Calu3 (cell line): ENCODE measurements at regions of chr1 and their contacts with region 1.

Region 1: GRCh38 chr1:247103859-247104591 is at the start of gene ZNF669:
- DNase-seq: peak; percentile 97
- H3K4me3 Mint-ChIP-seq: peak within 1 kb of the TSS; percentile 93
- H3K27ac Mint-ChIP-seq: peak within 1 kb of the TSS; percentile 89
- H3K4me1 Mint-ChIP-seq: peaks cover 6% of the 10 kb centered on the region
- H3K27me3 Mint-ChIP-seq: no peaks in the 10 kb centered on the region
- CTCF ChIP-seq: no peak
- total RNA-seq, gene ZNF669: 8.9 and 10.5 TPM in 2 replicates

Region 2: GRCh38 chr1:246931549-246932365 is 172.3 kb before region 1 on chr1 and contains the start of gene AHCTF1:
- CTCF ChIA-PET with region 1: no interaction called
- intact Hi-C with region 1: loop called (anchors 10 kb)
- DNase-seq: peak; percentile 97
- H3K4me3 Mint-ChIP-seq: peak within 1 kb of the TSS; percentile 97
- H3K27ac Mint-ChIP-seq: peak within 1 kb of the TSS; percentile 97
- H3K4me1 Mint-ChIP-seq: peaks cover 21% of the 10 kb centered on the region
- H3K27me3 Mint-ChIP-seq: no peaks in the 10 kb centered on the region
- CTCF ChIP-seq: no peak
- total RNA-seq, gene AHCTF1: 61.3 and 64.0 TPM in 2 replicates

Region 3: DNA sequence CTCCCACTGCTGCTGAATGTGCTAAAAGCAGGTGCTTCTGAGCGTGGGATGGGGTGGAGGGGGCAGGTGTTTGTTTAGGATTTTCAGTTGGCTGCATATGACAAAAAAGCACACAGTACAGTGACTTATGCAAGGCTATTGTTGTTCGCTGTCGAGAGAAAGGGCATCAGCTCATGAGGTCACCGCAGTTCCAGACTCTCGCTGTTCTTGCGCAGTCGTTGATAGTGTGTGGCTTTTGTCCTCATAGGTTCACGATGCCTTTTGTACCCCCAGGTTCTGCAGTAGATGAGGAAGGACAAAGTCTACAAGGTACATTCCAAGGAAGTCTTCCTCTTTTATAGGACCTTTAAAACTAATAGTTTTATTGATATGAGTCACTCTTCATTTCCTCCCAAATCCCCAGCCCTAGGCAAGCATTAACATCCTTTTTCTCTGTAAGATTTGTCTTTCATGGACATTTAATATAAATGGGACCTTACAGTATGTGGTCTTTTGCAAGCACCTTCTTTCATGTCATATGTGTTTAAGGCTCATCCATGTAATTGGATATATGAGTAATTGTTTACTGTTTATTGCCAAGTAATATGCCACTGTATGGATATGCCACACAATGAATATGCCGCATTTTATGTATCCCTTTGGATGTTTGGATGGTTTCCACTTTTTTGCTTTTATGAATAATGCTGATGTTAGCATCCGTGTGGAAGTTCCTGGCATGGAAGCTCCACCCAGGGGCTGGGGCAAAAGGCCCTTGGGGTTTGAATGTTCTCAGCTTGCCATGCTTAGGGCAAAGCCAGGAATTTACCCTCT is 297.5 kb after region 1 on chr1:
- CTCF ChIA-PET with region 1: no interaction called
- intact Hi-C with region 1: no loop called
- DNase-seq: no peak
- H3K4me3 Mint-ChIP-seq: no peak overlapping the region
- H3K27ac Mint-ChIP-seq: no peak overlapping the region
- H3K4me1 Mint-ChIP-seq: no peaks in the 10 kb centered on the region
- H3K27me3 Mint-ChIP-seq: no peaks in the 10 kb centered on the region
- CTCF ChIP-seq: no peak